Heart right ventricle (tissue), 16 donors: ENCODE measurements at regions of chr11 and their contacts with region 1.

Region 1: GRCh38 chr11:2377511-2378443 is 667 bp downstream of the CD81 start:
- DNase-seq: peak; percentile 73 to 78
- ATAC-seq: peak; percentile 22 to 58 (median 46)
- H3K4me3 ChIP-seq: peak overlapping the region; percentile 92 to 100 (median 99)
- H3K27ac ChIP-seq: peak overlapping the region; percentile 97 to 100 (median 99)
- H3K4me1 ChIP-seq: peaks cover 41 to 83% (median 56%) of the 10 kb centered on the region in 9 donors
- H3K27me3 ChIP-seq: no peaks in the 10 kb centered on the region
- CTCF ChIP-seq: no peak

Region 2: DNA sequence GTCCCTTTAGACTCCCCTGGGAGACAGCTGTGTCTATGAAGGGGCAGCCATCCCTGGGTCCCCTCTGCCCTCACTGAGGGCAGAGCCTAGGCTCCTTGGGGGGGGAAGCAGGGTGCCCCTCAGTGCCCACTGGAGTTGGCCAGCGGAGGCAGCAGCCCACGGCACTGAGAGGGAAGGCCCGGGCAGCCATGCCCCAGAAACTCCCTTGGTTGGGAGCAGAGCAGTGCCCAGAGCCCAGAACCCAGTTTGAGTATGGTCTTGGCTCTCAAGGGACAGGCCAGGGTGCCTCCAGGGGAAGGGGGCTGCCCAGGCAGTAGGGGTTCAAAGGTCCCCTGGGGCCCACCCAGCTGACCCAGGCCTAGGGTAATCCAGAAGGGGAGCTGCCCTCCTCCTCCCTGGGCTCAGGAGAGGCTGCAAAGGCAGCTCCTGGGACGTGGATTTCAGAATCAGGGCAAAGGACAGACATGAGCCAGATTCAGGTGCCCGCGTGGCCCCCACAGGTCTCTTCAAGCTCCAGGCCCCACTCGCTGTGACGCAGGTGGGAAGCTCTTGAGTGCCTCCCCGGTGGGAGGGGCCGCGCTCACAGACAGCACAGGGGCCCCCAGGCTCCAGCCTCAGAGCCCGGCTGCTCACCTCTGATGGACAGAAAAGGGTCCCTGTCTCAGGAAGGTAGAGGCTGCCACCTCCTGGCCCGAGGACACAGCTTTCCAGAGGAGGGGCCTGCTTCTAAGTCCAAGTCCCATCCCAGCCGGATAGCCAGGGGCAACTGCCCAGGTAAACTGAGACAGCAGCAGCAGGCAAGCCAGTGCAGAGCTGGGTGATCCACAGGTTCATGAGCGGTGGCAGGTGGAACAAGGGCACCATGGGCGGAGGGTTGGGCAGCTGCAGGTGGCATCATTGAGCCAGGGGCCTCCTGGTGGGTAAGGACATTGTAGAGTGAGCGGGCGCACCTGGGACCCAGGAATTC is 78.7 kb before region 1 on chr11:
- intact Hi-C with region 1: loop called in 2 of 10 experiments (anchors 2 to 10 kb)
- DNase-seq: no peak
- ATAC-seq: no peak
- H3K4me3 ChIP-seq: no peak overlapping the region
- H3K27ac ChIP-seq: peak overlapping the region in 3 of 10 donors; percentile 25 to 40 (median 31)
- H3K4me1 ChIP-seq: peaks cover 0 to 56% (median 14%) of the 10 kb centered on the region in 9 donors
- H3K27me3 ChIP-seq: no peaks in the 10 kb centered on the region
- CTCF ChIP-seq: peak in 7 of 9 donors; percentile 28 to 51 (median 38)

Region 3: GRCh38 chr11:2314525-2315394 is 63.0 kb before region 1 on chr11:
- intact Hi-C with region 1: loop called in 8 of 10 experiments (anchors 2 to 10 kb)
- DNase-seq: peak; percentile 91 to 95
- ATAC-seq: peak; percentile 78 to 91 (median 88)
- H3K4me3 ChIP-seq: peak overlapping the region in 6 of 10 donors; percentile 4 to 33 (median 22)
- H3K27ac ChIP-seq: peak overlapping the region; percentile 68 to 92 (median 86)
- H3K4me1 ChIP-seq: peaks cover 13 to 47% (median 31%) of the 10 kb centered on the region in 9 donors
- H3K27me3 ChIP-seq: no peaks in the 10 kb centered on the region
- CTCF ChIP-seq: no peak

Region 4: GRCh38 chr11:2325719-2326118 is 52.1 kb before region 1 on chr11:
- intact Hi-C with region 1: loop called in 2 of 10 experiments (anchors 2 to 5 kb)
- DNase-seq: peak in 1 of 2 donors; percentile 62
- ATAC-seq: peak; percentile 91 to 99 (median 95)
- H3K4me3 ChIP-seq: no peak overlapping the region
- H3K27ac ChIP-seq: peak overlapping the region in 9 of 10 donors; percentile 16 to 77 (median 50)
- H3K4me1 ChIP-seq: peaks cover 0 to 20% (median 0%) of the 10 kb centered on the region in 9 donors
- H3K27me3 ChIP-seq: no peaks in the 10 kb centered on the region
- CTCF ChIP-seq: no peak

Region 5: DNA sequence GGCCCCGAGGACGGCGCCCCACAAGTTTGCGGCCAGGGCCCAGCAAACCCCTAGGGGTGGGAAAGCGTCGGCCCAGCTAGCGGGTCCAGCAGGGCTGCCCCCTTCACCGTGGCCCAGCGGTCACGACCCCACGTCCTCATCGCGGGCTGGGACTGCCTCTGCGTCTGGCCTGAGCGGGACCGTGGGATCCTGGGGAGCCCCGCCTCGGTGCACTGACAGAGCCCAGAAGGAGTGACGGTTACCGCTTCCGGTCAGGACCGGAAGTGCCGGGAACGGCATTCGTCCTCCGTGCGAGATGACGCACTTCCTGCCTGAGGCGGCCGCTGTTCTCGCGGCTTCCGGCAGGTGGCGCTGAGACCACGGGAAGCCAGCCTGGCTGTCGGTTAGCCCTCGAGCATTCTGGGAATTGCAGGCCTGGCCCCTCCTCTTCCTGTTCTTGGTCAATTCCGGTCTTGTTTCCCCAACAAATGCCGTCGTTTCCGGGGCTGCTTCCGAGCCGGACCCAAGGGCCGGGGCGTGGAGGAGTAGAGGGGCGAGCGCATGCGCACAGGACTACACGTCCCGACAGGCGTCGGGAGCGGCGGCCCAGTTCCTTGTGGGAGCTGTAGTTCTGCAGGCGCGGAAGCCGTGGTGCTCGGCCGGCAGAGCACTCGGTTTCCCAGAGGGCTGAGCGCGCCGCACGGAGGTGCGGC is 22.4 kb after region 1 on chr11 and contains the start of gene TSSC4:
- intact Hi-C with region 1: loop called in 3 of 10 experiments (anchors 1 to 5 kb)
- DNase-seq: peak; percentile 100
- ATAC-seq: peak; percentile 91 to 96 (median 93)
- H3K4me3 ChIP-seq: peak within 1 kb of the TSS; percentile 72 to 99 (median 92)
- H3K27ac ChIP-seq: peak within 1 kb of the TSS; percentile 96 to 100 (median 98)
- H3K4me1 ChIP-seq: peaks cover 19 to 32% (median 27%) of the 10 kb centered on the region in 9 donors
- H3K27me3 ChIP-seq: no peaks in the 10 kb centered on the region
- CTCF ChIP-seq: peak; percentile 94 to 100 (median 99)
- total RNA-seq, gene TSSC4: 22.0 to 46.4 (median 29.2) TPM

Region 6: GRCh38 chr11:2409611-2410468 is 32.1 kb after region 1 on chr11:
- intact Hi-C with region 1: loop called in 1 of 10 experiments (anchors 5 kb)
- DNase-seq: no peak
- ATAC-seq: no peak
- H3K4me3 ChIP-seq: no peak overlapping the region
- H3K27ac ChIP-seq: no peak overlapping the region
- H3K4me1 ChIP-seq: no peaks in the 10 kb centered on the region
- H3K27me3 ChIP-seq: no peaks in the 10 kb centered on the region
- CTCF ChIP-seq: no peak